ENCODE measurements at regions of chr12 and their contacts with region 1.

Region 1: GRCh38 chr12:101759396-101760047 is 20.3 kb upstream of the SYCP3 start:
- DNase-seq: peak; percentile 38 to 55 (median 50)
- ATAC-seq: peak; percentile 83
- H3K4me3 ChIP-seq: no peak overlapping the region
- H3K27ac ChIP-seq: no peak overlapping the region
- H3K4me1 ChIP-seq: no peaks in the 10 kb centered on the region
- H3K27me3 ChIP-seq: no peaks in the 10 kb centered on the region
- CTCF ChIP-seq: peak; percentile 68 to 85 (median 68)
- EP300 ChIP-seq: no peak
- POLR2A ChIP-seq: no peak
- RAD21 ChIP-seq: peak; percentile 54 to 80

Region 2: GRCh38 chr12:101490286-101490920 is 269.1 kb before region 1 on chr12:
- CTCF ChIA-PET with region 1: no interaction called
- POLR2A ChIA-PET with region 1: interaction called, 3 read pairs
- in situ Hi-C with region 1: no loop called
- intact Hi-C with region 1: loop called (anchors 10 kb)
- DNase-seq: peak in 2 of 4 experiments; percentile 18 to 21
- ATAC-seq: peak; percentile 83
- H3K4me3 ChIP-seq: no peak overlapping the region
- H3K27ac ChIP-seq: no peak overlapping the region
- H3K4me1 ChIP-seq: no peaks in the 10 kb centered on the region
- H3K27me3 ChIP-seq: peaks cover 0 to 6% of the 10 kb centered on the region in 2 experiments; a peak in 2 of 5 replicates
- CTCF ChIP-seq: peak; percentile 46 to 54 (median 50); a peak in 4 of 6 replicates
- EP300 ChIP-seq: no peak
- POLR2A ChIP-seq: no peak
- RAD21 ChIP-seq: peak; percentile 12 to 54; a peak in 2 of 4 replicates

Region 3: DNA sequence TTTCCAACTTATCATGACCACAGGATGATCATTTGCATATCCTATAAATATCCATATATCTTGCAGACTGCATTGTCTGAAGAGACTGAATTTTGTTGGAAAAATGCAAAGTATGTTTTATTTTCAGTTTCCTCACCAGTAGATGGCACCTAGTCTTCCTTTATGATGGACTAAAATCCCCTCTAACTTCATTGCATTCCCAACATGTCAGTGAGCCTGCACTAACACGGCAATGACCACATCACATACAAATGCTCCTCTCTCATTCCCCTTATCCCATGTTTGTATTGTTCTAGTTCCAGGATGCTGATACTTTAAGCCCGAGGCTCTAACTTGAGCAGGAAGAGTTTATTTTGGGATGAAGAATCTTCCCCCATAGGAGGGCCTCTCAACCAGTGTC is 189.5 kb before region 1 on chr12:
- CTCF ChIA-PET with region 1: no interaction called
- POLR2A ChIA-PET with region 1: no interaction called
- in situ Hi-C with region 1: no loop called
- intact Hi-C with region 1: loop called (anchors 2 kb)
- DNase-seq: peak in 1 of 4 experiments; percentile 10
- ATAC-seq: peak; percentile 49
- H3K4me3 ChIP-seq: no peak overlapping the region
- H3K27ac ChIP-seq: no peak overlapping the region
- H3K4me1 ChIP-seq: no peaks in the 10 kb centered on the region
- H3K27me3 ChIP-seq: peaks cover 18 to 21% of the 10 kb centered on the region in 2 experiments
- CTCF ChIP-seq: peak in 2 of 3 experiments; percentile 28 to 43; a peak in 3 of 6 replicates
- EP300 ChIP-seq: no peak
- POLR2A ChIP-seq: no peak
- RAD21 ChIP-seq: peak; percentile 28 to 55; a peak in 3 of 4 replicates

Region 4: GRCh38 chr12:101619846-101620761 is 139.4 kb before region 1 on chr12:
- CTCF ChIA-PET with region 1: no interaction called
- POLR2A ChIA-PET with region 1: no interaction called
- in situ Hi-C with region 1: no loop called
- intact Hi-C with region 1: loop called (anchors 2 kb)
- DNase-seq: no peak
- ATAC-seq: no peak
- H3K4me3 ChIP-seq: no peak overlapping the region
- H3K27ac ChIP-seq: no peak overlapping the region
- H3K4me1 ChIP-seq: peaks cover 0 to 3% of the 10 kb centered on the region in 2 experiments; a peak in 1 of 5 replicates
- H3K27me3 ChIP-seq: no peaks in the 10 kb centered on the region
- CTCF ChIP-seq: no peak
- EP300 ChIP-seq: no peak
- POLR2A ChIP-seq: no peak
- RAD21 ChIP-seq: no peak

Region 5: GRCh38 chr12:101670007-101670687 is 89.4 kb before region 1 on chr12:
- CTCF ChIA-PET with region 1: no interaction called
- POLR2A ChIA-PET with region 1: no interaction called
- in situ Hi-C with region 1: no loop called
- intact Hi-C with region 1: loop called (anchors 1 kb)
- DNase-seq: peak; percentile 39 to 72 (median 50)
- ATAC-seq: peak; percentile 81
- H3K4me3 ChIP-seq: no peak overlapping the region
- H3K27ac ChIP-seq: no peak overlapping the region
- H3K4me1 ChIP-seq: no peaks in the 10 kb centered on the region; a peak in 3 of 5 replicates
- H3K27me3 ChIP-seq: peaks cover 2 to 7% of the 10 kb centered on the region in 2 experiments; a peak in 2 of 5 replicates
- CTCF ChIP-seq: peak; percentile 70 to 88 (median 75)
- EP300 ChIP-seq: peak; percentile 50; the same call in 1 of the 2 replicates
- POLR2A ChIP-seq: no peak
- RAD21 ChIP-seq: peak; percentile 71 to 82

Region 6: GRCh38 chr12:102010265-102010994 is 250.9 kb after region 1 on chr12:
- CTCF ChIA-PET with region 1: no interaction called
- POLR2A ChIA-PET with region 1: no interaction called
- in situ Hi-C with region 1: no loop called
- intact Hi-C with region 1: no loop called
- DNase-seq: no peak
- ATAC-seq: no peak; the same call in 2 of the 3 replicates
- H3K4me3 ChIP-seq: no peak overlapping the region
- H3K27ac ChIP-seq: no peak overlapping the region
- H3K4me1 ChIP-seq: no peaks in the 10 kb centered on the region
- H3K27me3 ChIP-seq: no peaks in the 10 kb centered on the region
- CTCF ChIP-seq: no peak
- EP300 ChIP-seq: no peak
- POLR2A ChIP-seq: no peak
- RAD21 ChIP-seq: no peak